A673 (cell line): ENCODE measurements at regions of chr7 and their contacts with region 1.

Region 1: GRCh38 chr7:85890244-85890811 is 703.5 kb upstream of the SEMA3D start:
- DNase-seq: peak; percentile 34
- H3K4me3 ChIP-seq: no peak overlapping the region
- H3K27ac ChIP-seq: no peak overlapping the region
- H3K4me1 ChIP-seq: no peaks in the 10 kb centered on the region
- H3K27me3 ChIP-seq: no peaks in the 10 kb centered on the region
- CTCF ChIP-seq: peak; percentile 66

Region 2: GRCh38 chr7:85972504-85973141 is 82.3 kb after region 1 on chr7:
- CTCF ChIA-PET with region 1: no interaction called
- POLR2A ChIA-PET with region 1: no interaction called
- intact Hi-C with region 1: no loop called
- DNase-seq: no peak
- H3K4me3 ChIP-seq: no peak overlapping the region
- H3K27ac ChIP-seq: no peak overlapping the region
- H3K4me1 ChIP-seq: no peaks in the 10 kb centered on the region
- H3K27me3 ChIP-seq: no peaks in the 10 kb centered on the region
- CTCF ChIP-seq: no peak

Region 3: DNA sequence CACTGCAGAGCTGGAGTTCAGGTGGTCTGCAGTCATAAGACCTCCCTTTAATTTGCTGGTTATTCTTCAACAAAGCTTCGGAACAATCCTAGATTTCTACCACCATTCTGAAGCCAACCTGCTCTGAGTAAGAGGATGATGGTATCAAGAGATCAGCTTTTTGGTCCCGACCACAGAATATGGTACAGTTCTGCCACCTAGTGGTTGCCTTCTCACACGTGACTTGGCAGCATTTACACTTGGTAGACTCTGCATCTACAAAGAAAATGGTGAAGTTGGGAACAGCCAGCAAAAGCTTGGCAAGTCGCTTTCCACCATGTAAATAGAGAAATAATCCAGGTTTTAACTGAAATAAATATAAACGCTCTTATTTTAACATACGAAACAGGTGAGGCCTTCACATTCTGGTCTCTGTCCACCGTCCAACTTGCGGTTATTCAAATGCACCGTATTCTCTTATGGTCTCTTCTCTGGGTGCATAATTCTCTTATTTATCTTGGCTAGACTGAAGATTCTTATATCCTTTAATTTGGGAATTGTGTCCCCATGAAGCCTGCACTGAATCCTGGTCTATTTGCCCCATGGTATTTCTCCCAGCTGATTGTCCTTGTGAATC is 579.5 kb after region 1 on chr7:
- CTCF ChIA-PET with region 1: interaction called, 21 read pairs
- POLR2A ChIA-PET with region 1: interaction called, 3 read pairs
- intact Hi-C with region 1: loop called (anchors 1 kb)
- DNase-seq: peak; percentile 78
- H3K4me3 ChIP-seq: no peak overlapping the region
- H3K27ac ChIP-seq: no peak overlapping the region
- H3K4me1 ChIP-seq: no peaks in the 10 kb centered on the region
- H3K27me3 ChIP-seq: peaks cover 39% of the 10 kb centered on the region
- CTCF ChIP-seq: peak; percentile 86